Calu3 (cell line): ENCODE measurements at regions of chr11 and their contacts with region 1.

Region 1: GRCh38 chr11:103601225-103601846 is 435.1 kb upstream of the DDI1 start:
- DNase-seq: peak; percentile 26
- H3K4me3 Mint-ChIP-seq: no peak overlapping the region
- H3K27ac Mint-ChIP-seq: no peak overlapping the region
- H3K4me1 Mint-ChIP-seq: no peaks in the 10 kb centered on the region
- H3K27me3 Mint-ChIP-seq: no peaks in the 10 kb centered on the region
- CTCF ChIP-seq: no peak

Region 2: GRCh38 chr11:103202048-103202651 is 399.2 kb before region 1 on chr11:
- CTCF ChIA-PET with region 1: interaction called, 6 read pairs
- intact Hi-C with region 1: loop called (anchors 2 kb)
- DNase-seq: no peak
- H3K4me3 Mint-ChIP-seq: no peak overlapping the region
- H3K27ac Mint-ChIP-seq: no peak overlapping the region
- H3K4me1 Mint-ChIP-seq: no peaks in the 10 kb centered on the region
- H3K27me3 Mint-ChIP-seq: no peaks in the 10 kb centered on the region
- CTCF ChIP-seq: no peak

Region 3: GRCh38 chr11:103257360-103257759 is 344.0 kb before region 1 on chr11:
- CTCF ChIA-PET with region 1: no interaction called
- intact Hi-C with region 1: loop called (anchors 1 kb)
- DNase-seq: no peak
- H3K4me3 Mint-ChIP-seq: no peak overlapping the region
- H3K27ac Mint-ChIP-seq: no peak overlapping the region
- H3K4me1 Mint-ChIP-seq: no peaks in the 10 kb centered on the region
- H3K27me3 Mint-ChIP-seq: no peaks in the 10 kb centered on the region
- CTCF ChIP-seq: no peak

Region 4: GRCh38 chr11:103326070-103326794 is 275.1 kb before region 1 on chr11:
- CTCF ChIA-PET with region 1: no interaction called
- intact Hi-C with region 1: loop called (anchors 1 kb)
- DNase-seq: peak; percentile 48
- H3K4me3 Mint-ChIP-seq: peak overlapping the region; percentile 44
- H3K27ac Mint-ChIP-seq: no peak overlapping the region
- H3K4me1 Mint-ChIP-seq: peaks cover 6% of the 10 kb centered on the region
- H3K27me3 Mint-ChIP-seq: no peaks in the 10 kb centered on the region
- CTCF ChIP-seq: peak; percentile 40

Region 5: DNA sequence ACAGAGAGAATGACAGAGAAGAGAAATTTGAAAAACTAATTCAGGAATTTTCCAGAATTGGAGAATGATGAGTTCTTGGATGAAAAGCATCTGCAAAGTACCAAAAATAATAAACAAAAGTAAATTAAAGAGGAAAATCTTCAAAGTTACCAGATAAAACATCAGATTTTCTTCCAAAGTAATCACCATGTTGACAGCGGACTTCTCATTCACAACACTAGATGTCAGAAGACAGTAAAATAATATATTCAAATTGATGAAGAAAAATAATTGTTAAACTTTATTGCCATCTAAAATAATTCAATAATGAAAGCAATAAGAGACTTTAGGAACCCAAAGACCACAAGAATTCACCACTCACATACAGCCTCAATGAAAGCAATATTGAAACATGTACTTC is 136.9 kb before region 1 on chr11:
- CTCF ChIA-PET with region 1: no interaction called
- intact Hi-C with region 1: loop called (anchors 5 kb)
- DNase-seq: no peak
- H3K4me3 Mint-ChIP-seq: no peak overlapping the region
- H3K27ac Mint-ChIP-seq: no peak overlapping the region
- H3K4me1 Mint-ChIP-seq: no peaks in the 10 kb centered on the region
- H3K27me3 Mint-ChIP-seq: no peaks in the 10 kb centered on the region
- CTCF ChIP-seq: no peak

Region 6: GRCh38 chr11:103709371-103709770 is 108.0 kb after region 1 on chr11:
- CTCF ChIA-PET with region 1: no interaction called
- intact Hi-C with region 1: no loop called
- DNase-seq: no peak
- H3K4me3 Mint-ChIP-seq: no peak overlapping the region
- H3K27ac Mint-ChIP-seq: no peak overlapping the region
- H3K4me1 Mint-ChIP-seq: peaks cover 2% of the 10 kb centered on the region
- H3K27me3 Mint-ChIP-seq: no peaks in the 10 kb centered on the region
- CTCF ChIP-seq: no peak